MCF 10A (cell line): ENCODE measurements at regions of chr6 and their contacts with region 1.

Region 1: DNA sequence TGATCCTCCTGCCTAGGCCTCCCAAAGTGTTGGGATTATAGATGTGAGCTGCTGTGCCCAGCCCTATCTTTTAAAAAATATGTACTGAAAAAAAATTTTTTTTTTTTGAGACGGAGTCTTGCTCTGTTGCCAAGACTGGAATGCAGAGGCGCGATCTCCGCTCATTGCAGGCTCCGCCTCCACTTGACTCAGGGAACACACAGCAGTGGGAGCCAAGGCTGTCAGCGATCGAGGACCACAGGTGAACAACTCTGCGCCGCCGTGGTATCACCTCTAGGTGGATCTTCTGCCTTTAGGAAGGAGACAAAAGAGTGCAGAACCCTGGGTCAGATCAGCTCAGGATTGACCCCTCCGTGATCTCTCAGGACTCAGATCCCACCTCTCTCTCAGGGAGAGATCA is 13.7 kb downstream of the RAET1E start:
- DNase-seq: no peak
- H3K4me3 Mint-ChIP-seq: no peak overlapping the region
- H3K27ac Mint-ChIP-seq: peak overlapping the region; percentile 32
- H3K4me1 Mint-ChIP-seq: peaks cover 28% of the 10 kb centered on the region
- H3K27me3 Mint-ChIP-seq: no peaks in the 10 kb centered on the region
- CTCF ChIP-seq: no peak

Region 2: DNA sequence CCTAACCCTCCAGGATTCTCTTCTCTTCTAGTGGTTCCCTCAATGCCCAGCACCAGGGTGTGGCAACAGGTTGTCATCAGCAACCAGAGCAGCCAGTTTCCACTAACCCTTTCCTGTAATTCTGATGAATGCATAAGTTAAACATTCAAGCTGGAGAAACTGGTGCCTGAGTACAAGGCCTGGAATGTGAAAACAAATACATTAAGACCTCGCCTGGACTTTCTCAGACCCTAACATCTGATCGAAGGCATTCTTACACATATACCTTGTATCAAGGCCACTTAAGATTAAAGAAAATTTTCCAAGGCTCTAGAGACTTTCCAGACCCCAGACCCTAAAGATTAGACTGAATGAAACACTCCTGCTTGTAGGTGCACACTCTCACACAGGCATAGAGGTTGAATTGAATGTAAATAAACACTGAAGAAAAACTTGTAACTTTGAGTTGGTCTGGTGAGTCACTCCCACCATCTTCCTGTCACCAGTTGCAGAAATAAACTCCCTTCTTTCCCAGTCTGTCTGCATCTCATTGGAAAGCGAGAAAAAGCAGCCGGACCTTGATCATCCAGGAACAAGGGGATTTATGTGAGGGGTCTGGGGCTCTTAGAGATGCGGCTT is 29.1 kb before region 1 on chr6:
- CTCF ChIA-PET with region 1: no interaction called
- POLR2A ChIA-PET with region 1: interaction called, 12 read pairs
- intact Hi-C with region 1: no loop called
- DNase-seq: peak; percentile 77
- H3K4me3 Mint-ChIP-seq: peak overlapping the region; percentile 68
- H3K27ac Mint-ChIP-seq: peak overlapping the region; percentile 92
- H3K4me1 Mint-ChIP-seq: peaks cover 71% of the 10 kb centered on the region
- H3K27me3 Mint-ChIP-seq: no peaks in the 10 kb centered on the region
- CTCF ChIP-seq: no peak

Region 3: DNA sequence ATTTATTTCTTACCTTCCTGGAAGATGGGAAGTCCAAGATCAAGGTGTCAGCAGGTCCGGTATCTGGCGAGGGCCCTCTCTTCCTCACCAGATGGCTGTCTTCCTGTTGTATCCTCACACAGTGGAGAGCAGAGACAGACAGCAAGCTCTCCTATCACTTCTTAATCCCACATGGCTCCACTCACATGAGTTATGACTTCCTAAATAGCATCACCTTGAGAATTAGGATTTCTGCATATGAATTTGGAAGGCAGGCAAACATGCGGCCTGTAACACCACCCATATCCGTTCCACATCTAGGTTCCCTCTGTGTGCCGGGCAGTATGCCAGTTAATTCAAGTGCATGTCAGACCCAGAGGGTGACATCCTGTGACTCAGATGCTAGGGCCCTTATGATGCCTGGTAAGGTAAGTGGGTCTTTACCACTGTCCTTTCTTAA is 11.6 kb after region 1 on chr6:
- CTCF ChIA-PET with region 1: interaction called, 4 read pairs
- POLR2A ChIA-PET with region 1: interaction called, 37 read pairs
- intact Hi-C with region 1: loop called (anchors 1 kb)
- DNase-seq: peak; percentile 92
- H3K4me3 Mint-ChIP-seq: peak overlapping the region; percentile 41
- H3K27ac Mint-ChIP-seq: peak overlapping the region; percentile 85
- H3K4me1 Mint-ChIP-seq: peaks cover 69% of the 10 kb centered on the region
- H3K27me3 Mint-ChIP-seq: no peaks in the 10 kb centered on the region
- CTCF ChIP-seq: no peak